A673 (cell line): ENCODE measurements at regions of chr17 and their contacts with region 1.

Region 1: DNA sequence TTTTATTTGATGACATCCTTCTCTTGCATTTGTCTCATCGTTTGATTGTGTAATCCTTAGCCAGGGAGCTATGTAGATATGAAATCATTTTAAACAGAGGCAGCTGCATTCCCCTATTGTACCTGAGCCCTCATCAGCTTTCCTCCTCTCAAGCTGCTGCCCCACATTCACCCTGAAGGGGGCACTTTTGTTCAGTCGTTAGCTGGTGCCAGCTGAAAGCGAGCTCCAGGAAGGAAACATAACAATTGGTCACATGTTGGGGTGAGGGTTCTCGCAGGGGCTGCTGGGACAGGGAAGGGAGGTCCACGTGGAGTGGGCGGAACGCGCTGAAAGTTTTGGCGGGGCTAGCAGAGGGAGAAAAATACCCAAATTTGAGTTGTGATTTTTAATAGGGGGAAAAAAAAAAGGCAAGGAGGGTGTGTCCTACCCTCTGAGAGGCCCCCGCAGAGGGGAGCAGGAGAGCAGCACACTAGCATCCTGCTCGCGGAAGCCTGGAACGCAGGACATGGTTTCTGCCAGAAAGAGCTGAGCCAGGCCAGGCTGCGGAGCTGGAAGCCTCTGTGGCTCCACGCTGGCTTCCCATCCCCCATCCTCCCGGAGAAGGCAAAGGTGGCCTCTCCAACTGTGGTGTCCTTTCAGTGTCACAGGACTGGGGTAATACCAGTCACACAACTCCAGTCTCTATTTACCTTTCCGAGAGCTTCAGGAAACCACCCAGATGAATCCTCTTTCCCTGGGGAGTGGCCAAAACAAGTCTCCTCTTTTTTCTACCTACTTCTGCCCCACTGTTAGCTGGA is 8.5 kb upstream of the MSL1 start:
- DNase-seq: peak; percentile 93
- H3K4me3 ChIP-seq: peak overlapping the region; percentile 40
- H3K27ac ChIP-seq: peak overlapping the region; percentile 52
- H3K4me1 ChIP-seq: peaks cover 18% of the 10 kb centered on the region
- H3K27me3 ChIP-seq: no peaks in the 10 kb centered on the region
- CTCF ChIP-seq: peak; percentile 74; the same call in 1 of the 2 replicates

Region 2: GRCh38 chr17:40168262-40168832 is 55.0 kb after region 1 on chr17:
- CTCF ChIA-PET with region 1: interaction called, 11 read pairs
- POLR2A ChIA-PET with region 1: no interaction called
- intact Hi-C with region 1: no loop called
- DNase-seq: peak; percentile 41
- H3K4me3 ChIP-seq: no peak overlapping the region
- H3K27ac ChIP-seq: no peak overlapping the region
- H3K4me1 ChIP-seq: no peaks in the 10 kb centered on the region
- H3K27me3 ChIP-seq: no peaks in the 10 kb centered on the region
- CTCF ChIP-seq: peak; percentile 54

Region 3: DNA sequence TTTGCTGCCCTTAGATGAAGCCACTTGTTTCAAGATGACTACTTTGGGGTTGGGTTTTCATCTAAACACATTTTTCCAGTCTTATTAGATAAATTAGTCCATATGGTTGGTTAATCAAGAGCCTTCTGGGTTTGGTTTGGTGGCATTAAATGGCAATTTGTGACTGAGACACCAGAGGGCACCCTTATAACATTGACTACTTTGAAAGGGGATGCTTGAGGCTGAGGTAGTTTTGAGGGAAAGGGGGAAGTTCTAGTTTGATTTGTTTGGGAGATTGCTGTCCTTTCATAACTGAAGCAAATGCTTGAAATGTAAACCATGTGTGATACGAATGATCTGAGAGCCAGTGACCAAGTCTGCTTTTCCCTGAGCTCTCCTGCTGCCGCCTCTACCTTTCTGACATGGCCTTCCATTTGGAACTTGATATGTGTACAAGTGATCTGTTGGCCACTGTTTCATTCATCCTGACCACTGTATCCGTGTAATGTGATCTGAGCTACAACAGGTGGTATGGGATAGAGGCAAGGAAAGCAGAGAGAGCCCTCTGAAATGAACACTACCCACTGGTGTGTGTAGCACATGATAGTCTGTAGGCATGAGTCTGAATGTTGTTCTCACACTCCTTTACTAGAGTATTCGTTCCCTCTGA is 189.8 kb after region 1 on chr17:
- CTCF ChIA-PET with region 1: no interaction called
- POLR2A ChIA-PET with region 1: no interaction called
- intact Hi-C with region 1: no loop called
- DNase-seq: peak; percentile 67
- H3K4me3 ChIP-seq: no peak overlapping the region
- H3K27ac ChIP-seq: no peak overlapping the region
- H3K4me1 ChIP-seq: peaks cover 35% of the 10 kb centered on the region
- H3K27me3 ChIP-seq: no peaks in the 10 kb centered on the region
- CTCF ChIP-seq: peak; percentile 69